ENCODE measurements at regions of chr11 and their contacts with region 1.

Region 1: GRCh38 chr11:77381729-77382685 is 80.5 kb upstream of the GDPD4 start:
- DNase-seq: peak in 1 of 3 donors; percentile 5
- H3K4me3 ChIP-seq: no peak overlapping the region
- H3K4me3 Mint-ChIP-seq: no peak overlapping the region
- H3K27ac ChIP-seq: peak overlapping the region in 1 of 2 donors; percentile 52
- H3K27ac Mint-ChIP-seq: peak overlapping the region in 5 of 7 donors; percentile 15 to 74 (median 31)
- H3K4me1 ChIP-seq: no peaks in the 10 kb centered on the region
- H3K4me1 Mint-ChIP-seq: peaks cover 5% of the 10 kb centered on the region
- H3K27me3 ChIP-seq: no peaks in the 10 kb centered on the region
- H3K27me3 Mint-ChIP-seq: no peaks in the 10 kb centered on the region
- CTCF ChIP-seq: no peak

Region 2: GRCh38 chr11:77438487-77438886 is 56.5 kb after region 1 on chr11:
- intact Hi-C with region 1: no loop called
- DNase-seq: no peak
- H3K4me3 ChIP-seq: no peak overlapping the region
- H3K4me3 Mint-ChIP-seq: no peak overlapping the region
- H3K27ac ChIP-seq: no peak overlapping the region
- H3K27ac Mint-ChIP-seq: no peak overlapping the region
- H3K4me1 ChIP-seq: peaks cover 48 to 52% of the 10 kb centered on the region in 2 donors
- H3K4me1 Mint-ChIP-seq: peaks cover 55% of the 10 kb centered on the region
- H3K27me3 ChIP-seq: no peaks in the 10 kb centered on the region
- H3K27me3 Mint-ChIP-seq: peaks cover 0 to 3% (median 0%) of the 10 kb centered on the region in 3 donors
- CTCF ChIP-seq: no peak

Region 3: GRCh38 chr11:77547863-77548551 is 166.0 kb after region 1 on chr11:
- intact Hi-C with region 1: loop called (anchors 5 kb)
- DNase-seq: peak; percentile 43 to 64 (median 58)
- H3K4me3 ChIP-seq: no peak overlapping the region
- H3K4me3 Mint-ChIP-seq: peak overlapping the region in 1 of 2 donors; percentile 59
- H3K27ac ChIP-seq: no peak overlapping the region
- H3K27ac Mint-ChIP-seq: no peak overlapping the region
- H3K4me1 ChIP-seq: no peaks in the 10 kb centered on the region
- H3K4me1 Mint-ChIP-seq: peaks cover 11% of the 10 kb centered on the region
- H3K27me3 ChIP-seq: no peaks in the 10 kb centered on the region
- H3K27me3 Mint-ChIP-seq: peaks cover 0 to 1% (median 0%) of the 10 kb centered on the region in 3 donors
- CTCF ChIP-seq: peak; percentile 70

Measured in CD14-positive monocyte (primary cell).